ENCODE measurements at regions of chr6 and their contacts with region 1.

Region 1: DNA sequence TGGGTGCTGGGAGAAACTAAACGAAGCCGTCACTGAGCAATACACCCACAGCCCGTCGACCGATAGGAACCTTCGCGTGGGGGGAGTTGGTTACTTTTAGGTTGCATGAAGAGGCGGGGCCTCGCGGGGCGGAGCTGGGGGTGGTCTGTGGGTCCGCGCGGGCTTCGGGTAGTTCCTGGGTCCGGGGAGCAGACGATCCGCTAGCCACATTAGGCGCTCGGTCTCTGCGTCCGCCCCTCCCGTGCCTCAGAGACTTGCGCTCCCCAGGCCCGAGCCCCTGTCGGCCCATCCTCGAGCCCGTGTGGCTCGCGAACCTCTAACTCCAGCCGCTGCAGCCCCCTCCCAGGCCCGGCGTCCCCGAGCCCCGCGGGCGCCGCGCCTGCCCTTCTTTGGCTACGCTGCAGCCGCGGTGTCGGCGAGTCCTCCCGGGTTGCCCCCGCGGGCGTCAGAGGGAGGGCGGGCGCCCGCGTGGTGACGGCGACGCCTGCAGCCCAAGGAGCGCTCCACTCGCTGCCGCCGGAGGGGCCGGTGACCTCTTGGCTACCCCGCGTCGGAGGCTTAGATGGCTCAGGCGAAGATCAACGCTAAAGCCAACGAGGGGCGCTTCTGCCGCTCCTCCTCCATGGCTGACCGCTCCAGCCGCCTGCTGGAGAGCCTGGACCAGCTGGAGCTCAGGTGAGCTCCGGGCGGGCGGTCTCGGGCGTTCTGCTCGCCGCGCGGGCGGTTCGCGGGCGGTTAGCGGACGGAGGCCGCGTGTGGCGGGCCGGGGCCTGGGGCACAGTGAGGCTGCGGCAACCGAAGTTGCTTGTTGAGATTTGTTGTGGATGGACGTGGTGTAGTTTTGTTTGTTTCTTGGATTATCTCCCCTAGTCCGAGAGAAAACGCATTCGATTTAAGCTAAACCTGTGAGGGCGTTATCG is at the start of gene BAG2:
- DNase-seq: peak; percentile 89 to 90
- ATAC-seq: peak; percentile 85 to 94 (median 90)
- H3K4me3 ChIP-seq: peak within 1 kb of the TSS; percentile 74
- H3K4me3 Mint-ChIP-seq: peak within 1 kb of the TSS; percentile 91
- H3K27ac ChIP-seq: peak within 1 kb of the TSS; percentile 81
- H3K27ac Mint-ChIP-seq: peak within 1 kb of the TSS; percentile 85 to 88
- H3K4me1 ChIP-seq: peaks cover 11% of the 10 kb centered on the region
- H3K4me1 Mint-ChIP-seq: peaks cover 20 to 21% of the 10 kb centered on the region in 2 donors
- H3K27me3 ChIP-seq: no peaks in the 10 kb centered on the region
- H3K27me3 Mint-ChIP-seq: no peaks in the 10 kb centered on the region
- CTCF ChIP-seq: no peak
- total RNA-seq, gene BAG2: 2.8 to 3.6 (median 3.2) TPM

Region 2: DNA sequence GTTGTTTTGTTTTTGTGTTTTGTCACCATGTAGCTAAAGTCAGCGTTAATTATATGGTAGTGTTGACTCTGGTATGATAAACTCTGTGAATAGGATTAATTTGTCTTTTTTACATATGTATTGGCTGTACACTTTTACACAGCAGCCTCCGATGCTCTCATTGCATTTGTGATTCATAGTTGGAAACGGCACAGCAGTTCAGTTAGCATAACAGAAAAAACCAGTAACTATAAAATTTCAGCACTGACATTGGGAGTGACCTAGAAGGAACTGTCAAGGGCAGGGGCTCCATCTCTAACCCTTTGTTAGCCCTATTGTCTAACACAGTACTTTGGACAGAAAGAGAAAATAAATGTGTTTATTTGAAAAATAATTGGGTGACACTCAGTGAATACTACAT is 223.1 kb before region 1 on chr6:
- intact Hi-C with region 1: no loop called
- DNase-seq: no peak
- ATAC-seq: no peak
- H3K4me3 ChIP-seq: no peak overlapping the region
- H3K4me3 Mint-ChIP-seq: no peak overlapping the region
- H3K27ac ChIP-seq: no peak overlapping the region
- H3K27ac Mint-ChIP-seq: no peak overlapping the region
- H3K4me1 ChIP-seq: peaks cover 7% of the 10 kb centered on the region
- H3K4me1 Mint-ChIP-seq: peaks cover 9 to 13% of the 10 kb centered on the region in 2 donors
- H3K27me3 ChIP-seq: peaks cover 17% of the 10 kb centered on the region
- H3K27me3 Mint-ChIP-seq: peaks cover 21 to 66% of the 10 kb centered on the region in 2 donors
- CTCF ChIP-seq: no peak

Region 3: GRCh38 chr6:57048577-57048976 is 123.8 kb before region 1 on chr6:
- intact Hi-C with region 1: loop called (anchors 2 kb)
- DNase-seq: no peak
- ATAC-seq: no peak
- H3K4me3 ChIP-seq: no peak overlapping the region
- H3K4me3 Mint-ChIP-seq: peak overlapping the region; percentile 46
- H3K27ac ChIP-seq: no peak overlapping the region
- H3K27ac Mint-ChIP-seq: peak overlapping the region; percentile 48 to 54
- H3K4me1 ChIP-seq: peaks cover 4% of the 10 kb centered on the region
- H3K4me1 Mint-ChIP-seq: peaks cover 30 to 33% of the 10 kb centered on the region in 2 donors
- H3K27me3 ChIP-seq: no peaks in the 10 kb centered on the region
- H3K27me3 Mint-ChIP-seq: peaks cover 0 to 5% of the 10 kb centered on the region in 2 donors
- CTCF ChIP-seq: no peak

Region 4: DNA sequence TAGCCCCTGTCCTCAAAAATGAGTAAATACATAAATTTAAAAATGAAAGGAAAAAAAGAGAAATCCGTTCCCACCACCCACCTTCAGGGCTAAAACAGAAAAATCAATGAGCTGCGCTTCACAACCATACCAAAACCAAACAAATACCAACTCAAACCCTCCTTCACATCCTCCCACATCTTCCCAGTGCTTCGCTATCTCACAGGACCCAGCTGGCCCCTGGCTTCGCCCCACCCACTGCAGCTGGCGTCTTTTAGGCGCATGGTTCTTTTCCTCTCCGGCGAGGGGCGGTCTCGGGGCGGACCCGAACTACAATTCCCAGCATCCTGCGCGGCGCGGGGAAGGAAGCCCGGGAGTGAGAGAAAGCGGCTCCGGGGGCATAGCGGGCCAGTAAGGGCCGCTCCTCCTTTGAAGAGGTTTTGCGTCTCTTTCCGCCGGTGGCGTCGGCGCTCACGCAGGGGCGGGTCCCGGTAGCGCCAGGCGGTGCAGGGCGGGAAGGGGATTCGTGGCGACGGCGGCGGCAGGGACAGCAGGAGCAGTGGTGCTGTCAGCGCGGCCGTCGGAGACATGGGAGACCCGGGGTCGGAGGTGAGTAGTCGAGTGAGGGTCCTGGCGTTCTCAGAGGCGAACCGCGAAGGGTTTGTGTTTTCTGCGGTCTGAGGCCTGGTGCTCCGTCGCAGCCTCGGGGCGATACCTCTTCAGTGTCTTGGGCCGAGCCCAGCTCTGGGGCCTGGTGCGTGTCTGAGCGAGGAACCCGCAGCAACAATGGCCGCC is 82.5 kb before region 1 on chr6 and contains the start of gene ZNF451:
- intact Hi-C with region 1: loop called (anchors 1 kb)
- DNase-seq: peak; percentile 93 to 96
- ATAC-seq: peak; percentile 91 to 97 (median 93)
- H3K4me3 ChIP-seq: peak within 1 kb of the TSS; percentile 71
- H3K4me3 Mint-ChIP-seq: peak within 1 kb of the TSS; percentile 94
- H3K27ac ChIP-seq: peak within 1 kb of the TSS; percentile 78
- H3K27ac Mint-ChIP-seq: peak within 1 kb of the TSS; percentile 87 to 93
- H3K4me1 ChIP-seq: peaks cover 6% of the 10 kb centered on the region
- H3K4me1 Mint-ChIP-seq: peaks cover 31 to 35% of the 10 kb centered on the region in 2 donors
- H3K27me3 ChIP-seq: no peaks in the 10 kb centered on the region
- H3K27me3 Mint-ChIP-seq: no peaks in the 10 kb centered on the region
- CTCF ChIP-seq: no peak
- total RNA-seq, gene ZNF451: 121 to 131 (median 122) TPM

Region 5: DNA sequence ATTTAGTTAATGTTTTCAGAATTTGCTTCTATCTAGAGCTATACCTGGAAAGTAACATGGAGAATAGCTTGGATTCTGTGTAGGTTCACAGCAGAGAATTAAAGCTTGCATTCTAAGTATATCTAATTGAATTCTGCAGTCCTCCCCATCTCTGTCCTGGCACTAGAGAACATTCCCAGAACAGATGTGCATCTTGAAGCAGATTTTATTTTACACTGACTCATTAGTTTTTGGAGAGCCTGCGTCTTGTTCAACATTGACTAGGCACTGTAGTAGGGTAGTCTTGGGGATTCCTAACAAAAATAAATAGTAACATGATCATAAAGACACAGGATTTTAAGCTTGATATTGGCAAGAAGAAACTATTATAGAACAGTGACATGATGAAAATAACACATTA is 36.5 kb before region 1 on chr6:
- intact Hi-C with region 1: loop called (anchors 2 kb)
- DNase-seq: no peak
- ATAC-seq: no peak
- H3K4me3 ChIP-seq: no peak overlapping the region
- H3K4me3 Mint-ChIP-seq: no peak overlapping the region
- H3K27ac ChIP-seq: no peak overlapping the region
- H3K27ac Mint-ChIP-seq: peak overlapping the region in 1 of 2 donors; percentile 9
- H3K4me1 ChIP-seq: no peaks in the 10 kb centered on the region
- H3K4me1 Mint-ChIP-seq: peaks cover 12 to 22% of the 10 kb centered on the region in 2 donors
- H3K27me3 ChIP-seq: no peaks in the 10 kb centered on the region
- H3K27me3 Mint-ChIP-seq: no peaks in the 10 kb centered on the region
- CTCF ChIP-seq: no peak

Region 6: DNA sequence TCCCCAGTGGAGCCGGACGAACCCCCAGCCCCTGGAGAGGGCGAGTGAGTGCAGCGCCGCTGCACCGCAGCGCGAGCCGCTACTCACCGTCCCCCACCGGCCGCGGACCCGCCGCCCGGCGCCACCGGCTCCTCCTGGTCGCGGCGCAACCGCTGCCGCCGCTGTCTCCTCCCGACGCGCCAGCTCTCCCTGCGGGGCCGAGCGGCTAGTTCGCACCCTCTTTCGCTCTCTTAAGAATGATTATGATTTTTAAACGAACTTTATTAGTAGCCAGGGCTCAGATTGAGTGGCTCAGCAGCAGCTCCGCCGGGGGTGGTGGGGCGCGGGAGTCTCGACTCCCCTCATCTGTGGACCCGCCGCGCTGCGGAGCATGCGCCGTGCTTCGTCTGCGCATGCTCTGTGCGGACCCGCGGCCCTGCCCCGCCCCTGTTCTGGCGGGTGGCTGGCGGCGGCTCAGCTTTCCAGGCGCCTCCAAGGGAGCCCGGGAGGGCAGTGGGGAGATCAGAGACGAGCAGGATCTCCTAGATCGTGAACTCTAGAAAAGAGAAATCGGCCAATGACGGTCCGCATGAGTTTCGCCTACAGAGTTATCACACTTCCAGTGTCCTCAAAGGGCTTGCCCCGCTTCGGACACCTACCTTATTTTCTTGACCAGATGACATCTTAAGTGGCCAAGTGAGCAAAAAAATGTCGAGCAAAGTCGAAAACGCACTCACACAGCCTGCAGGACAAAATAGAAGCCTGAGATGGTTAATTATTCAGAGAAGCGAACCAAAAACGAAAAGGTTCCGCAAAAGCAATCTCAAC is 49.7 kb after region 1 on chr6 and contains the start of gene RAB23:
- intact Hi-C with region 1: loop called (anchors 1 kb)
- DNase-seq: peak; percentile 83 to 93
- ATAC-seq: peak; percentile 90 to 91 (median 91)
- H3K4me3 ChIP-seq: peak within 1 kb of the TSS; percentile 98
- H3K4me3 Mint-ChIP-seq: peak within 1 kb of the TSS; percentile 99
- H3K27ac ChIP-seq: peak within 1 kb of the TSS; percentile 36
- H3K27ac Mint-ChIP-seq: peak within 1 kb of the TSS; percentile 82 to 94
- H3K4me1 ChIP-seq: peaks cover 7% of the 10 kb centered on the region
- H3K4me1 Mint-ChIP-seq: peaks cover 11% of the 10 kb centered on the region in 2 donors
- H3K27me3 ChIP-seq: peaks cover 11% of the 10 kb centered on the region
- H3K27me3 Mint-ChIP-seq: peaks cover 24 to 37% of the 10 kb centered on the region in 2 donors
- CTCF ChIP-seq: no peak
- total RNA-seq, gene RAB23: 0.31 to 1.3 (median 0.77) TPM

Region 7: GRCh38 chr6:57283911-57284455 is 111.6 kb after region 1 on chr6:
- intact Hi-C with region 1: no loop called
- DNase-seq: no peak
- ATAC-seq: no peak
- H3K4me3 ChIP-seq: no peak overlapping the region
- H3K4me3 Mint-ChIP-seq: no peak overlapping the region
- H3K27ac ChIP-seq: no peak overlapping the region
- H3K27ac Mint-ChIP-seq: no peak overlapping the region
- H3K4me1 ChIP-seq: no peaks in the 10 kb centered on the region
- H3K4me1 Mint-ChIP-seq: no peaks in the 10 kb centered on the region
- H3K27me3 ChIP-seq: no peaks in the 10 kb centered on the region
- H3K27me3 Mint-ChIP-seq: peaks cover 19 to 38% of the 10 kb centered on the region in 2 donors
- CTCF ChIP-seq: no peak

Region 8: DNA sequence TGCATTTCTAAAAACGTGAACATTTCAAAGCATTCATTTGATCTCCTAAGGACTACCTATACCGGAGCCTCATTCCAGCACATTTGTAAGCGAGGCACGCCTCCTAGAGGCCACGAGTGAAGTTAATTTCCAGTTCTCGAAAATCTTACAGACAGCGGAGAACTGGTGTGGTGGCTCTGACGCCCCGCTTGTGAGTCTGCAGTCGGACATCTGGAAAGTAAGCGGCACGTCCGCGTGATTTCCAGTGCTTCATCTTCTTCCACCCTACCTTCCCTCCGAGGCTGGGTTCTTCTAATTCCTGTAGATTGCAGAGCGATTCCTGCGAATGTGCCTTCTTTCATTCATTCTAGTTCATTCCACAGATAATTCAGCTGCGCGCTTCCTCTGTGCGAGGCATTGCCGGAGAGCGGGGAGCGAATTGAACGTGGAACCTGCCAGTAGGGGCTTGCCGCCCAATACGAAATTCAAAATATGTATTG is 144.2 kb after region 1 on chr6:
- intact Hi-C with region 1: loop called (anchors 1 kb)
- DNase-seq: peak; percentile 70 to 92
- ATAC-seq: peak; percentile 84 to 92 (median 86)
- H3K4me3 ChIP-seq: peak overlapping the region; percentile 70
- H3K4me3 Mint-ChIP-seq: peak overlapping the region; percentile 97
- H3K27ac ChIP-seq: peak overlapping the region; percentile 6
- H3K27ac Mint-ChIP-seq: peak overlapping the region; percentile 88 to 94
- H3K4me1 ChIP-seq: peaks cover 12% of the 10 kb centered on the region
- H3K4me1 Mint-ChIP-seq: peaks cover 27 to 39% of the 10 kb centered on the region in 2 donors
- H3K27me3 ChIP-seq: no peaks in the 10 kb centered on the region
- H3K27me3 Mint-ChIP-seq: peaks cover 0 to 16% of the 10 kb centered on the region in 2 donors
- CTCF ChIP-seq: peak; percentile 94